ENCODE measurements at regions of chr4 and their contacts with region 1.

Region 1: DNA sequence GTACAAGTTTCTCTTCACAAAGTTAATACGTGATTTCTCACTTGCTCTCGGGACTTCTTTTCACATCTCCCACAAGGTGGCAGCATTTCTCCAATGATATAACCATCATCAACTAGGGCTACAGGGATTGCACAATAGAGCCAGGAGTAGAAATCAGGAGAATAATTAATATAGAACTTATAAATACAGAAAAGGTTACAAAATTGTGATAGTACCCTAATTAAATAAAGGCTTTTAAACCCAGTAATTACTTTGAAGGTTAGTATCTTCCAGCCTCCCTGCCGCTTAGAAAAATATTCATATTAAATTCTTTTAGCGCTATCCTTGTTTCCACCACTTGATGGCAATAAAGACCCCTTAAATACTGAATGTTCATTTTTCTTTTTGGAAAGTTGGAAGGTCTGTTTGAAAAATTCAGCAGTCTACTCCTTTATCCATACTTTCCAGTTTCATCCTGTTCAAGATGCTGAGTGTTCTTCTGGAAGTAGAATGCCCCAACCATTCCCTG is 65.8 kb downstream of the RASGEF1B start:
- DNase-seq: peak; percentile 41
- ATAC-seq: peak; percentile 78
- H3K4me3 ChIP-seq: no peak overlapping the region
- H3K27ac ChIP-seq: no peak overlapping the region
- H3K4me1 ChIP-seq: no peaks in the 10 kb centered on the region
- H3K27me3 ChIP-seq: no peaks in the 10 kb centered on the region; the same call in 1 of the 2 replicates
- CTCF ChIP-seq: peak; percentile 71; the same call in 1 of the 2 replicates

Region 2: GRCh38 chr4:81392164-81392563 is 13.8 kb before region 1 on chr4:
- CTCF ChIA-PET with region 1: no interaction called
- POLR2A ChIA-PET with region 1: no interaction called
- in situ Hi-C with region 1: no loop called
- intact Hi-C with region 1: no loop called
- DNase-seq: no peak
- ATAC-seq: no peak
- H3K4me3 ChIP-seq: no peak overlapping the region
- H3K27ac ChIP-seq: no peak overlapping the region
- H3K4me1 ChIP-seq: no peaks in the 10 kb centered on the region
- H3K27me3 ChIP-seq: no peaks in the 10 kb centered on the region
- CTCF ChIP-seq: no peak

Region 3: DNA sequence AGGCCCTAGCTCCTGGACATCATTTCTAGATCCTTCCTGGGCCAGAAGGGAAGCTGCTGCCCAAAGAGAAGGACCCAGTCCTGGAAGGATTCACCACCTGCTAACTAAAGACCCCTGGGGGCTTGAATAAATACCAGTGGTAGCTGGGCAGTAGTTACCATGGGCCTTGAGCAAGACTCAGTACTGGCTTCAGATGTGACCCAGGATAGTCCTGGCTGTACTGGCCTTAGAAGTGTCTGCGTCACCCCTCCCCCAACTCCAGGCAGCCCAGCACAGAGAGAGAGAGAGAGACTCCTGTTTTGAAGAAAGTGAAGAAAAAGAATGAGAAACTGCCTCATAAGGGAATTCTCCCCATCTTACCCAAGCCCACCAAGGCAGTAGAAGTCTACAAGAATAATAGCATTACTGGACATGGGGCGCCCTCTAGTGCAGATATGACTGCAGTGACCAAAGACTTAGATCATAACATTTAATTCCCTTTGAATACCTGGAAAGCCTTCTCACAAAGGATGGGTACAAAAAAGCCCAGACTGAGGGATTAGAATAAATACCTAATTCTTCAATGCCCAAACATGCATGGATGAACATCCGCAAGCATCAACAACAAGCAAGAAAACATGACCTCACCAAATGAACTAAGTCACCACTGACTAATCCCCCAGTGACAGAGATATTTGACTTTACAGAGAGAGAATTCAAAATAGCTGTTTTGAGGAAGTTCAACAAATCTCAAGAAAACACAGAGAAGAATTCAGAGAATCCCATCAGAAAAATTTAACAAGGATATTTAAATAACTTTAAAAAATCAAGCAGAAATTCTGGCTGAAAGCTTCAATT is 796.1 kb after region 1 on chr4:
- CTCF ChIA-PET with region 1: no interaction called
- POLR2A ChIA-PET with region 1: no interaction called
- in situ Hi-C with region 1: no loop called
- intact Hi-C with region 1: loop called (anchors 2 kb)
- DNase-seq: peak; percentile 7
- ATAC-seq: peak; percentile 74; the same call in 1 of the 2 replicates
- H3K4me3 ChIP-seq: no peak overlapping the region
- H3K27ac ChIP-seq: no peak overlapping the region
- H3K4me1 ChIP-seq: no peaks in the 10 kb centered on the region
- H3K27me3 ChIP-seq: no peaks in the 10 kb centered on the region
- CTCF ChIP-seq: peak; percentile 73

Region 4: GRCh38 chr4:82268050-82268825 is 862.3 kb after region 1 on chr4:
- CTCF ChIA-PET with region 1: no interaction called
- POLR2A ChIA-PET with region 1: no interaction called
- in situ Hi-C with region 1: no loop called
- intact Hi-C with region 1: loop called (anchors 1 kb)
- DNase-seq: peak; percentile 35
- ATAC-seq: peak; percentile 99
- H3K4me3 ChIP-seq: no peak overlapping the region
- H3K27ac ChIP-seq: no peak overlapping the region
- H3K4me1 ChIP-seq: no peaks in the 10 kb centered on the region
- H3K27me3 ChIP-seq: peaks cover 9% of the 10 kb centered on the region
- CTCF ChIP-seq: peak; percentile 83

Measured in Panc1 (cell line).